ENCODE measurements at regions of chr20 and their contacts with region 1.

Region 1: DNA sequence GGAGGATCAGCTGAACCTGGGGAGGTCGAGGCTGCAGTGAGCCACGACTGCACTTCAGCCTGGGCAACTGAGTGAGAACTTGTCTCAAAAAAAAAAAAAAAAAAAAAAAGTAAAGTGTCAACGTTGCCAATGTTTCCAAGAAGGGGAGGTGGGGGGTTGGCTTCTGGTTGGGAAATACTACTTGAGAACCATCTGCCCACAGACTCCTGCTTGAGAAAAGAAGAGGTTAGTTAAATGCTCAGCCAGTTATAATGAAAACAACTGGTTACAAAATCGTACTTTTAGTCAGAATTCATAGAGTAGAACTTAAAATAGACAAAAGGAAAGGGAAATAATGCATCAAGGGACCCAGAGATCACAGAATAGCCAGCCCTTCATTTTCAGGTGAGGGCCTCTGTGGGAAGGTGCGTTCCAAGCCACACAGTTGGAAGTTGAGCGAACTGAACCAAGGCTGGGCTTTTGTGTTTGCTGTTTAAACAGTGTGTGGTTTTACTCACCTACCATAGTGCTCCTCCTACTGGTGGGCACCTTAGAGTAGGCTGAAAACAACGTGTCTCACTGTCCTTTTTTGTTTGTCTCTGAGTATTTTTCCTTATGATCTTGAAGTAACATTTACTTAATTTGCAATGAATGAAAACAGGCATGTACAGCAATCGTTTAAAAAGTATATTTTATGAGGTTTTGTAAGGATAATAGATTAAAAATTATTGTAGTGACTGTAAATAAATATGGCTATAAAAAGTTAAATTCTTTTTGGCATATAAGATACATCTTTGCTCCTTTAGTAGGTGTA is 200.7 kb downstream of the BCAS1 start:
- DNase-seq: peak; percentile 96
- ATAC-seq: peak; percentile 92
- H3K4me3 ChIP-seq: peak overlapping the region in 2 of 3 experiments; percentile 8; a peak in 2 of 6 replicates
- H3K27ac ChIP-seq: peak overlapping the region; percentile 37
- H3K4me1 ChIP-seq: peaks cover 77% of the 10 kb centered on the region
- H3K27me3 ChIP-seq: no peaks in the 10 kb centered on the region
- CTCF ChIP-seq: peak; percentile 99
- EP300 ChIP-seq: peak in 1 of 2 experiments; percentile 79; a peak in 3 of 4 replicates
- POLR2A ChIP-seq: no peak
- RAD21 ChIP-seq: peak; percentile 97

Region 2: GRCh38 chr20:53643031-53643832 is 226.4 kb before region 1 on chr20:
- CTCF ChIA-PET with region 1: no interaction called
- POLR2A ChIA-PET with region 1: interaction called, 9 read pairs
- in situ Hi-C with region 1: no loop called
- intact Hi-C with region 1: loop called (anchors 1 kb)
- DNase-seq: no peak
- ATAC-seq: peak; percentile 77
- H3K4me3 ChIP-seq: peak overlapping the region; percentile 34 to 64 (median 48); a peak in 5 of 6 replicates
- H3K27ac ChIP-seq: peak overlapping the region; percentile 93
- H3K4me1 ChIP-seq: peaks cover 81% of the 10 kb centered on the region
- H3K27me3 ChIP-seq: no peaks in the 10 kb centered on the region
- CTCF ChIP-seq: no peak
- EP300 ChIP-seq: no peak; a peak in 1 of 4 replicates
- POLR2A ChIP-seq: peak in 1 of 2 experiments; percentile 77; a peak in 2 of 4 replicates
- RAD21 ChIP-seq: no peak

Region 3: GRCh38 chr20:53706008-53706465 is 163.6 kb before region 1 on chr20:
- CTCF ChIA-PET with region 1: no interaction called
- POLR2A ChIA-PET with region 1: no interaction called
- in situ Hi-C with region 1: no loop called
- intact Hi-C with region 1: no loop called
- DNase-seq: no peak
- ATAC-seq: no peak
- H3K4me3 ChIP-seq: no peak overlapping the region
- H3K27ac ChIP-seq: no peak overlapping the region
- H3K4me1 ChIP-seq: peaks cover 36% of the 10 kb centered on the region
- H3K27me3 ChIP-seq: no peaks in the 10 kb centered on the region
- CTCF ChIP-seq: no peak
- EP300 ChIP-seq: no peak
- POLR2A ChIP-seq: no peak
- RAD21 ChIP-seq: no peak

Region 4: DNA sequence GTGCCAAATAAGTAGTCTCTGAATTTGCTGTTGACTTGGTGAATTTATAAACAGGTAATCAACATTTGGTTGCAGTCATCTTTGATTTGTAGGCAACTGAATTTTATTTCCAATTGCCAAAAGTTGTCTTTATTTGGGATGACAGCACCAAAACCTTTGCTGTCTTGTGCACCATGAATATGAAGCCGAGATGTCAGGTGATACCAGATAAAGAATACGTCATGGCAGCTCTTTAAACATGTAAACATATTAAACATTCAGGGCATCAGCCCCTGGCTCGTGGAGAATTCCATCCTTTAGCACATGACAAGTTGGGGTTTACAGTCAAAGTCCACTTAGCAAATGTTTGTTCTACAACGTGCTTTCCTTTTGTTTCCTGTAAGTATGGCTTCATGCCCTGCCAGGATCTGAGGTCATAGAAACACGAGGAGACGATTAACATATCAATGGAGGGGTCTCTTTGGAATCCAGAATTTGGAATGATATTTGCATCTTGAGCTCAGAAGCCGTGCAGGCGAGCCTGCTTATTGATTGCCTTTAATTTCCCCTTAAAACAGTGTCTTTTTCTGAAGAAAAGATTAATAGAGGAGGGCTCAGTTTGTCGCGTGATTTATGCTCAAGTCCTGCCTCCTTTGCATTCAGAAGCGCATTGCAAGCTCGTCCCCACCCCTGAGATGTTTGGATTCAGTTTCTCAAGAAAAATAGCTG is 105.8 kb before region 1 on chr20:
- CTCF ChIA-PET with region 1: no interaction called
- POLR2A ChIA-PET with region 1: interaction called, 27 read pairs
- in situ Hi-C with region 1: no loop called
- intact Hi-C with region 1: loop called (anchors 1 kb)
- DNase-seq: peak; percentile 100
- ATAC-seq: peak; percentile 95
- H3K4me3 ChIP-seq: no peak overlapping the region; a peak in 1 of 6 replicates
- H3K27ac ChIP-seq: peak overlapping the region; percentile 89
- H3K4me1 ChIP-seq: peaks cover 77% of the 10 kb centered on the region
- H3K27me3 ChIP-seq: no peaks in the 10 kb centered on the region
- CTCF ChIP-seq: no peak
- EP300 ChIP-seq: peak; percentile 95 to 99; a peak in 3 of 4 replicates
- POLR2A ChIP-seq: peak; percentile 26 to 48; a peak in 2 of 4 replicates
- RAD21 ChIP-seq: 0 out of 2 replicates have a peak, but pooled peaks have one; percentile 15

Region 5: DNA sequence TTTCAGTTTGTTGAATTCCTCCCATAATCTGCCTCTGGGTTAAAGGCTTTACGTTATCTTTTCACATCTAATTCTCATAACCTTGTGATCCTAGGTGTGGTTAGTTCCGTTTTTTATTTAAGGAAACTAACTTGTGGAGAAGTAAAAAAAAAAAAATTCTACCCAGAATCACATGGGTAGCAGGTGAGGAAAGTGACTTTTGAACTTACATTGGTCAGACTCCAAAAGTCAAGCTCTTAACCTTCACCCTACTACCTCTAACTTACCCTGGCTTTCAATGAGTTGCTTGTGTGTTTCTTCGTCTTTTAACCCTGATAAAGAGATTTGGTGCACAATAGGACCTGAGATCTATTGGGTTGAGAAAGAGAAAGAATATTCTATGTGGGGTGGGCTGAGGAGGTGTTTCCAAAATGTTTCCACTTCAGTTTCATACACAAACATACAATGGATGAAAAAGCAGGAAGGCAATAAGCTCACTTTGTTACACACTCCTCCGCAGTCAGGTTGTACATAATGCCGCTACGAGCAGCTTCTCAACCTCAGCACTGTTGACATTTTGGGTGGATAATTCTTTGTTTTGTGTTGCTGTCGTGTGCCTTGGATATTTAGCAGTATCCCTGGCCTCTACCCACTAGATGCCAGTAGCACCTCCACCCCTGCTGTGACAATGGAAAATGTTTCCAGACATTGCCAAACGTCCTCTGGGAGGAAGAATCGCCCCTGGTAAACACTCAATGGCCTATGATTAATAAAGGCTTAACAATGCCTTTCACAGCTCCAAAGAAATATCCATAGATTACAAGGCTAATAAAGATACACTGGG is 83.0 kb before region 1 on chr20:
- CTCF ChIA-PET with region 1: no interaction called
- POLR2A ChIA-PET with region 1: interaction called, 35 read pairs
- in situ Hi-C with region 1: no loop called
- intact Hi-C with region 1: no loop called
- DNase-seq: peak; percentile 56
- ATAC-seq: peak; percentile 77
- H3K4me3 ChIP-seq: peak overlapping the region; percentile 26 to 52 (median 27)
- H3K27ac ChIP-seq: peak overlapping the region; percentile 72
- H3K4me1 ChIP-seq: peaks cover 65% of the 10 kb centered on the region
- H3K27me3 ChIP-seq: no peaks in the 10 kb centered on the region
- CTCF ChIP-seq: peak; percentile 46
- EP300 ChIP-seq: peak in 1 of 2 experiments; percentile 82; a peak in 2 of 4 replicates
- POLR2A ChIP-seq: no peak
- RAD21 ChIP-seq: peak; percentile 40

Region 6: GRCh38 chr20:53857723-53858236 is 11.9 kb before region 1 on chr20:
- CTCF ChIA-PET with region 1: no interaction called
- POLR2A ChIA-PET with region 1: interaction called, 13 read pairs
- in situ Hi-C with region 1: no loop called
- intact Hi-C with region 1: no loop called
- DNase-seq: no peak
- ATAC-seq: peak; percentile 59
- H3K4me3 ChIP-seq: peak overlapping the region in 1 of 3 experiments; percentile 29; a peak in 1 of 6 replicates
- H3K27ac ChIP-seq: no peak overlapping the region
- H3K4me1 ChIP-seq: peaks cover 54% of the 10 kb centered on the region
- H3K27me3 ChIP-seq: no peaks in the 10 kb centered on the region
- CTCF ChIP-seq: no peak
- EP300 ChIP-seq: no peak
- POLR2A ChIP-seq: no peak
- RAD21 ChIP-seq: no peak

Region 7: GRCh38 chr20:53899351-53900167 is 29.9 kb after region 1 on chr20:
- CTCF ChIA-PET with region 1: no interaction called
- POLR2A ChIA-PET with region 1: no interaction called
- in situ Hi-C with region 1: no loop called
- intact Hi-C with region 1: no loop called
- DNase-seq: no peak
- ATAC-seq: peak; percentile 38; the same call in 2 of the 3 replicates
- H3K4me3 ChIP-seq: no peak overlapping the region
- H3K27ac ChIP-seq: no peak overlapping the region
- H3K4me1 ChIP-seq: peaks cover 34% of the 10 kb centered on the region
- H3K27me3 ChIP-seq: peaks cover 1 to 10% of the 10 kb centered on the region in 2 experiments; a peak in 2 of 5 replicates
- CTCF ChIP-seq: no peak
- EP300 ChIP-seq: no peak
- POLR2A ChIP-seq: no peak
- RAD21 ChIP-seq: no peak